Right lobe of liver (tissue), 6 donors: ENCODE measurements at regions of chr14 and their contacts with region 1.

Region 1: DNA sequence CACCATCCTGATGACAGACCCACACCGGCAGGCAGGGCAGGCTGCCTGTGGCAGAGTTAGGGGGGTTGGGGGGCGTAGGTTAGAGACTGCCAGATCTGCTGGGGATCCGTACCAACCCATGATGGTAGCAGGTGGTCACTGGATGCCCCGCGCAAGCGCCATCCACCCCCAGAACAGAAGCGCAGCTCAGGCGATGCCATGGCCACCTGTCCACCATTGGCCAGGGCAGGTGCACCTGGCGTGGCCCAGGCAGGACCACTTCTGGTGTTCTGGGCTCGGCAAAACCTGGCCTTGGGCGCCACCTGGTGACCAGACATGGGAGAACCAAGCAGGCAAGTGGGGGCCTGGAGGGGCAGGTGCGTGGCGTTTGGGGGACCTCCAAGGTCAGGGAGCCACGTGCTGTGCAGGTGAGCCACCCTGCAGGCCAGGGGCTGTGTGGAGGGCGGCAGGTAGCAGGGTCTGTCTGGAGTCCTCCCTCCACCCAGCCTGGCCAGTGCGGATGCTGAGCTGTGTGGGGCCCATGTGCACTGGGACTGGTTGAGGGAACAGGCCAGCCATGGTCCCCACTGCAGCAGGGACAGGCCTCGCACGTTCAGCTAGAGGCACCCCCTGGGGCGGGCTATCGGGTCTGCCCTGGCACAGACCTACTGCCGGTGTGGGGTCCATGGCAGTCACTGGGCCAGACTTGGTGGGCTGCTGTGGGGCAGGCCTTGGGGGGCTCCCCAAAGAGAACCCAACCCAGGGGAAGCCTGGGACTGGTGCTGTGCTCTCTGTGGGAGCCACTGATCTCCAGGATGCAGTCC is 15.6 kb downstream of the BAG5 start:
- DNase-seq: peak; percentile 75 to 82 (median 78)
- ATAC-seq: peak; percentile 55 to 72 (median 72)
- H3K4me3 ChIP-seq: no peak overlapping the region
- H3K27ac ChIP-seq: no peak overlapping the region
- H3K4me1 ChIP-seq: no peaks in the 10 kb centered on the region
- H3K27me3 ChIP-seq: no peaks in the 10 kb centered on the region
- CTCF ChIP-seq: peak; percentile 86 to 92 (median 90)
- POLR2A ChIP-seq: no peak

Region 2: GRCh38 chr14:103500148-103500990 is 46.5 kb before region 1 on chr14:
- intact Hi-C with region 1: loop called (anchors 5 to 10 kb)
- DNase-seq: peak; percentile 88 to 89 (median 89)
- ATAC-seq: peak; percentile 95 to 97 (median 96)
- H3K4me3 ChIP-seq: no peak overlapping the region
- H3K27ac ChIP-seq: no peak overlapping the region
- H3K4me1 ChIP-seq: peaks cover 0 to 9% (median 0%) of the 10 kb centered on the region in 4 donors
- H3K27me3 ChIP-seq: no peaks in the 10 kb centered on the region
- CTCF ChIP-seq: peak; percentile 83 to 94 (median 92)
- POLR2A ChIP-seq: no peak